ENCODE measurements at regions of chr1 and their contacts with region 1.

Region 1: DNA sequence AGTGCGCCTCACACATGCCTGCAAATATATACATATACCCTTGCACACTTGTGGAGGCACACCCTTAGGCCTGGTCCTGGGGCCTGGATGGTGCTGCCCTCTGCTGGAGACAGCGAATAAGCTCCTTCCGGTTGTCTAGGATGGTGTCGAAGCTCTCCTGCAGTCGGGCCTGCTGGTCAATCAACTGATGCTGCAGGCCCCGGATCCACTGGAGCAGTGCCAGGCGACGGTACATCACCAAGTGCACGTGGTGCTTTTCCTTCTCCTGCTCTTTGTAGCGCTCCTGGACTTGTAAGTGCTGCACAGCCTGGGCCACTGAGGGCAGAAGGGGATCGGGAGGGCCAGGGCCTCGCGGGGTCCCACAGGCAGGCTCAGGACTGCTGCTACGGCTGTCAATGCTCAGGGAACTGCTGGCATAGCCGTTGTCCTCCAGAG is 3.1 kb downstream of the C1orf216 start:
- DNase-seq: peak; percentile 85
- ATAC-seq: peak; percentile 60
- H3K4me3 Mint-ChIP-seq: peak overlapping the region; percentile 30
- H3K27ac Mint-ChIP-seq: no peak overlapping the region
- H3K4me1 Mint-ChIP-seq: peaks cover 30% of the 10 kb centered on the region
- H3K27me3 Mint-ChIP-seq: no peaks in the 10 kb centered on the region
- CTCF ChIP-seq: peak; percentile 96

Region 2: GRCh38 chr1:35577071-35577998 is 138.2 kb before region 1 on chr1:
- CTCF ChIA-PET with region 1: interaction called, 22 read pairs
- POLR2A ChIA-PET with region 1: interaction called, 5 read pairs
- intact Hi-C with region 1: loop called (anchors 5 kb)
- DNase-seq: peak; percentile 81
- ATAC-seq: peak; percentile 92
- H3K4me3 Mint-ChIP-seq: peak overlapping the region; percentile 81
- H3K27ac Mint-ChIP-seq: peak overlapping the region; percentile 87
- H3K4me1 Mint-ChIP-seq: peaks cover 20% of the 10 kb centered on the region
- H3K27me3 Mint-ChIP-seq: peaks cover 10% of the 10 kb centered on the region
- CTCF ChIP-seq: no peak

Region 3: DNA sequence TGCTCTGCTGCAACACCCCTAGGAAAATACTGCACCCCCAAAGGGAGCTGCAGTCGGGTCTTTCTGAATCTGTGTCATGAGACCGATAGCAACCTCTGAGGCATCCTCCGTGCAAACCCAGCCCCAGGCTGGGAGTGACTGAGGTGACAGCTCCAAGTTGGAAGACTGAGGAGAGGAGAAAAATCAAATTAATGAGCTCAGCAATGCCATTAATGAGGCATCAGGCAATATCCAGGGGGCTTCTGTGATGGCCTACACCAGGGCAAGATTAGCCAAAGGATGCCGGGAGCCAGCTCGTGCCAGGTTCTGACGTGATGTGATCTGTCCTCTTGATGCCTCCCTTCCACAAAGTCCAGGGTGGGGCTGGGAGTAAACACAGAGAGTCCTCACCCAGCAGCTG is 43.5 kb before region 1 on chr1:
- CTCF ChIA-PET with region 1: interaction called, 12 read pairs
- POLR2A ChIA-PET with region 1: no interaction called
- intact Hi-C with region 1: no loop called
- DNase-seq: no peak
- ATAC-seq: no peak
- H3K4me3 Mint-ChIP-seq: no peak overlapping the region
- H3K27ac Mint-ChIP-seq: no peak overlapping the region
- H3K4me1 Mint-ChIP-seq: no peaks in the 10 kb centered on the region
- H3K27me3 Mint-ChIP-seq: peaks cover 9% of the 10 kb centered on the region
- CTCF ChIP-seq: no peak

Region 4: DNA sequence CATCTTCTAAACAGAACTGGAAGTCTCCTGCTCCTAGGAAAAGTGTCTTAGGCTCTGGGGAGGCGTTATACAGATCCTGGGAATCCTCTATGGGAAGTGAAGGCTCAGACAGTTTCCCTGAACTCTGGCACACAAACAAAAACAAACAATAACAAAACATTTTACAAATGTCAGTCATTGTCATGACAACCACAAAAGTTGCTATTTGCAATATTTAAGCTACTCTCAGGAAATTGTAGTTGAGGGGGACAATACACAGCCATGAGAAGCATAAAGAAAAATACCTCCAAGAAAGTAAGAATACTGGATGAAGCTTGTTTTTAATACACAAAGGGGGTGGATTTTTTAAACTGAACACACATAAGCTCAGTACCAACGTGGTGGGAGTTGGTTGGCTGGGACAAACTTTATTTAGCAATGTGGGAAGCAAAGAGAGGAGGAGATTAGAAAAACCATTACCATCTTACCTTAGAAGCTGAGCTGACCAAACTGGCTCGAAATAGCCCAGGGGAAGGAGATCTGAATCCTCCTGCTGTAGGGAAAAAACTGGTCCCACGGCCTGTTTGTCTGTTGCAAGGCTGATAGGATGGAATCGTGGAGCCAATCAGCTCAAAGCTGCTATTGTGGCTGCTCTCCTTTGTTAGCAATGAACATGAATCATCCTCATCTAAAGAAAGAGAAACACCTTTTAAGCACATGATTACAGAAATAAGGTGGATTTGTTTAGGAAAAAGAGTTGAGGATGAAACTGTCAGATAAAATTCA is 32.5 kb after region 1 on chr1:
- CTCF ChIA-PET with region 1: interaction called, 10 read pairs
- POLR2A ChIA-PET with region 1: interaction called, 3 read pairs
- intact Hi-C with region 1: no loop called
- DNase-seq: no peak
- ATAC-seq: no peak
- H3K4me3 Mint-ChIP-seq: no peak overlapping the region
- H3K27ac Mint-ChIP-seq: no peak overlapping the region
- H3K4me1 Mint-ChIP-seq: peaks cover 4% of the 10 kb centered on the region
- H3K27me3 Mint-ChIP-seq: no peaks in the 10 kb centered on the region
- CTCF ChIP-seq: no peak

Region 5: GRCh38 chr1:36187800-36188593 is 472.4 kb after region 1 on chr1:
- CTCF ChIA-PET with region 1: no interaction called
- POLR2A ChIA-PET with region 1: no interaction called
- intact Hi-C with region 1: no loop called
- DNase-seq: peak; percentile 88
- ATAC-seq: peak; percentile 98
- H3K4me3 Mint-ChIP-seq: no peak overlapping the region
- H3K27ac Mint-ChIP-seq: peak overlapping the region; percentile 24
- H3K4me1 Mint-ChIP-seq: peaks cover 2% of the 10 kb centered on the region
- H3K27me3 Mint-ChIP-seq: no peaks in the 10 kb centered on the region
- CTCF ChIP-seq: peak; percentile 81